Posterior vena cava (tissue), 2 donors: ENCODE measurements at regions of chr22 and their contacts with region 1.

Region 1: GRCh38 chr22:50030297-50031188 is 18.0 kb upstream of the IL17REL start:
- DNase-seq: peak; percentile 92

Region 2: GRCh38 chr22:49925525-49926128 is 104.9 kb before region 1 on chr22:
- intact Hi-C with region 1: loop called (anchors 2 kb)
- DNase-seq: no peak

Region 3: GRCh38 chr22:49960159-49961004 is 70.2 kb before region 1 on chr22 and contains the start of gene PIM3:
- intact Hi-C with region 1: no loop called
- DNase-seq: peak; percentile 97
- total RNA-seq, gene PIM3: 29.9 to 37.2 TPM

Region 4: DNA sequence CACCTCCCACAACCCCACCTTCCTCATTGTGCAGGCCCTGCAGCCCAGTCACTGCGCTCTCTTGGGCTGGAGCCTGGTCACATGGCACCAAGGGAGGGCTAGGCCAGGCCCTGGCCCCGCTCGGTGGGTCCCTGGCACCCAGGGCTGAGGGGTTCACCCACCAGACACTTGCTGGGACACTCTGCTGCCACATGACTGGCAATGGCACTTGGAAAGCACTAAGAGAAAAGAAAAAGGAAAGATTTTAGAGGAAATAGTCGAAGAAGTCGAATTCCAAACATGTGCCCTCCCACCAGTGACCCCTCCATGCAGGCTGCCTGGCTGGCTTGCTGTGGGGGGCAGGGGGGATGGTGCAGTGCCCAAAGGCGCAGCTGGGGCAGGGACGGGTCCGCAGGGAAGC is 39.8 kb after region 1 on chr22:
- intact Hi-C with region 1: loop called in 1 of 2 experiments (anchors 1 kb)
- DNase-seq: no peak